Breast epithelium (tissue), 4 donors: ENCODE measurements at regions of chr9 and their contacts with region 1.

Region 1: DNA sequence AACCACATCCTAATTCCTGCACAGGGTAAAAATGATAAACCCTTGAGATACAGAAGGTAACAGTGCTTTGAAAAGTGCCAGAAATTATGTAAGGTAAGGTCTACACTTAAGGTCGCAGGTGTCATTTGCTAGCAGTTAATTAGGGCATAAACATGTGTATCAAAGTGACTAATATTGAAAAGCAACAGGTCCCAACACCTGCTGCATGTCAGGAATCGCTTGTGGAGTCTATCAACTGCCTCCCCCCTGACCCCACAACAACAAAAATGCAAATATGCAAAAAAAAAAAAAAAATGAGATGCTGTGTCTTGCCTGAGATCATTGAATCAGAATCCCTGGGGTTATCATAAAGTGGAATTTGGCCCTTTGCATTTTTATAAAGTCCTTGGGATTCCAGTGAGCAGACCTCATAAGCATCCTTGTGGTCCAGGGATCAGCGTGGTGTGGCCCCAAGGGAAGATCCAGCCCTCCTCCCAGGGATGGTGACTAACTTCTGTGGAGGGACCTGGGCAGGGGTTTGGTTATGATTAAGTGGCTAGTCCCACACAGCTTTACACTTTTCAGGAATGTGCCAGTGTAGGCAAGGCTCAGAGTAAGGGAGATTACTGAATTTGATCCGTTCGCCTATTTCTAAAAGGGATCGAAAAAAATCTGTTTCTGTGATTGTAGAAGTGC is 92.5 kb upstream of the TNFSF8 start:
- DNase-seq: no peak
- H3K4me3 ChIP-seq: no peak overlapping the region
- H3K27ac ChIP-seq: peak overlapping the region; percentile 48 to 82
- H3K4me1 ChIP-seq: peaks cover 0 to 3% of the 10 kb centered on the region in 2 donors
- H3K27me3 ChIP-seq: no peaks in the 10 kb centered on the region
- CTCF ChIP-seq: no peak
- POLR2A ChIP-seq: no peak

Region 2: GRCh38 chr9:114207034-114207810 is 815.7 kb before region 1 on chr9:
- intact Hi-C with region 1: loop called (anchors 5 kb)
- DNase-seq: peak in 1 of 2 donors; percentile 35
- H3K4me3 ChIP-seq: no peak overlapping the region
- H3K27ac ChIP-seq: peak overlapping the region; percentile 37 to 49
- H3K4me1 ChIP-seq: peaks cover 3 to 15% of the 10 kb centered on the region in 2 donors
- H3K27me3 ChIP-seq: no peaks in the 10 kb centered on the region
- CTCF ChIP-seq: no peak
- POLR2A ChIP-seq: no peak

Region 3: DNA sequence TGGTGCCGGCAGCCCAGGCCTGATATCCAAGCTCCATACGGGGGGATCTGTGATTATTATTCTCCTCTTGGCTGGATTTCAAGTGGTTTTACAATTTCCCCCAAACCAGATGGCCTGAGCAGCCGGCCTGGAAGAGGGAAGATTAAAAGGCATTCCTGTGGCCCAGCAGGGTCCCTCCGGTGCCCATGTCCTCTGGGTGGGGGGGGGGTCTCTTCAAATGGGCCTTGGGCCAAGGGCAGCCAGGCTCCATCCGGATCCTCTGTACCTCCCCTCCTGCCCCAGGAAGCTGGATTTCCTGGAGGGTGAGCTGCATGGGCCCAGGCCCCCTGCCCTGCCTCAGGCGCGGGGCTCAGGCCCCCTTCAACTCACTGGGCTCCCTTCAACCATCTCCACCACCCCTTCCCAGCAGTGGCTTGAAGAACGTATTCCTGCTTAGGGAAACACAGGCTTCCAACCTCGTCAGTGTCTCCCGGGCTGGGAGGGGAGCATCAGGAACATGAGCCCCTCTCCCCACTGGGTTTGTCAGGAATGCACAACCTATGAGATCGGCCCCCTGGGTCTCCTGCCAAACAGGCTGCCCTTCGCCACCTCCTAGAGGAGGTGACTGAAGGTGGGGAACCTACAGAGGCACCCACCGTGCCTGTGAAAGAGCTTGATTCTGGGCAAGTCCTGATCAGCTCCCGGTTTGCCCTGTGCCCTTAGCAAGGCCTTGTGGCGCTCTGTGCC is 762.9 kb before region 1 on chr9:
- intact Hi-C with region 1: no loop called
- DNase-seq: no peak
- H3K4me3 ChIP-seq: no peak overlapping the region
- H3K27ac ChIP-seq: no peak overlapping the region
- H3K4me1 ChIP-seq: no peaks in the 10 kb centered on the region
- H3K27me3 ChIP-seq: no peaks in the 10 kb centered on the region
- CTCF ChIP-seq: no peak
- POLR2A ChIP-seq: no peak

Region 4: GRCh38 chr9:114691046-114691955 is 331.6 kb before region 1 on chr9:
- intact Hi-C with region 1: no loop called
- DNase-seq: peak in 1 of 2 donors; percentile 19
- H3K4me3 ChIP-seq: no peak overlapping the region
- H3K27ac ChIP-seq: peak overlapping the region; percentile 44 to 46
- H3K4me1 ChIP-seq: no peaks in the 10 kb centered on the region
- H3K27me3 ChIP-seq: no peaks in the 10 kb centered on the region
- CTCF ChIP-seq: no peak
- POLR2A ChIP-seq: no peak